ENCODE measurements at regions of chr15 and their contacts with region 1.

Region 1: GRCh38 chr15:45457641-45458433 is 64.7 kb downstream of the SLC30A4 start:
- DNase-seq: peak; percentile 78
- H3K4me3 ChIP-seq: peak overlapping the region; percentile 30 to 52 (median 48)
- H3K27ac ChIP-seq: peak overlapping the region; percentile 79 to 82 (median 80)
- H3K4me1 ChIP-seq: peaks cover 0 to 18% (median 14%) of the 10 kb centered on the region in 4 donors
- H3K27me3 ChIP-seq: no peaks in the 10 kb centered on the region
- CTCF ChIP-seq: peak; percentile 51 to 89 (median 84)
- EP300 ChIP-seq: no peak
- POLR2A ChIP-seq: no peak

Region 2: GRCh38 chr15:44426975-44427755 is 1030.7 kb before region 1 on chr15 and contains the start of gene CTDSPL2:
- intact Hi-C with region 1: no loop called
- DNase-seq: peak; percentile 99
- H3K4me3 ChIP-seq: peak within 1 kb of the TSS; percentile 66 to 89 (median 82)
- H3K27ac ChIP-seq: peak within 1 kb of the TSS; percentile 92 to 95 (median 94)
- H3K4me1 ChIP-seq: peaks cover 0 to 33% (median 26%) of the 10 kb centered on the region in 4 donors
- H3K27me3 ChIP-seq: no peaks in the 10 kb centered on the region
- CTCF ChIP-seq: peak in 2 of 4 experiments; percentile 14 to 19
- EP300 ChIP-seq: no peak
- POLR2A ChIP-seq: peak; percentile 29 to 55
- total RNA-seq, gene CTDSPL2: 25.4 to 57.8 (median 44.9) TPM

Region 3: DNA sequence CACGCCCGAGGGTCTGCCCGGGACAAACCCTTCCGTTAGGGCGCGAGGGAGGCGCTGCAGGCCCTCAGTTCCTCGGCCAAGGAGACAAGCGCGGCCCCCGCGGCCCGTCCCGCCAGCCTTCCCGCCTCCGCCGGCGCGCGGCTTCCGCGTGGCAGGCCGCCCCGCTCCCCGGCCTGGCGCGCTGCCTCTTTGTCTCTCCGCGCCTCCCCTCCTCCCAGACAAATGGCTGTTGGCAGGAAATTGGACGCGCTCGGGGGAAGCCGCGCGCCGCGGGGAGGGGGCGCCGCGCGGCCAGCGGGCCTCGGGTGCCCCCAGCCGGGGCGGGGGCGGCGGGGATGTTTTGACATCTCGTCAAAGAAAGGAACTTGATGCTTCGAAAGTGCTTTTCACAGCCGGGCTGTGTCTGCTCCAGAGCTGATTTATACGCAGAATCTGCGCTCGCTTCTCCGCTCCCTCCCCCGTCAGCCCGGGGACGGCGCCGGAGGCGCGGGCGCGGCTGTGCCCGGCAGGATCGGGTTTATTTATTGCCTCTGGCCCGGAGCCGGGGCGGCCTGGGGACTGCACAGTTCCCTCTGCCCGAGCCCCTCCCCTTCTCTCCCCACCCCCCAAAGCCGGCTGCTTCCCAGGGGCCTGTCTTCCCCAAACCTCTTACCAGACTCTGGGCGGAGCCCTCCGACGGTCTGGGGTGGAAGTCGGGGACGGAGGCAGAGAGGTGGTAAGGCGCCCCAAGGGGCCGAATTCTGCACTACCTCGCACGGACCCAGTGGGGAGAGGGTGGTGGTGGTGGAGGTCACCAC is 290.8 kb before region 1 on chr15:
- intact Hi-C with region 1: loop called (anchors 5 kb)
- DNase-seq: peak; percentile 95
- H3K4me3 ChIP-seq: peak overlapping the region; percentile 46 to 64 (median 56)
- H3K27ac ChIP-seq: peak overlapping the region; percentile 90 to 99 (median 96)
- H3K4me1 ChIP-seq: peaks cover 0 to 33% (median 21%) of the 10 kb centered on the region in 4 donors
- H3K27me3 ChIP-seq: no peaks in the 10 kb centered on the region
- CTCF ChIP-seq: peak; percentile 42 to 77 (median 70)
- EP300 ChIP-seq: no peak
- POLR2A ChIP-seq: peak in 1 of 2 donors; percentile 45

Region 4: GRCh38 chr15:45279024-45279698 is 178.7 kb before region 1 on chr15:
- intact Hi-C with region 1: loop called (anchors 2 kb)
- DNase-seq: peak; percentile 99
- H3K4me3 ChIP-seq: peak overlapping the region; percentile 50 to 59 (median 54)
- H3K27ac ChIP-seq: peak overlapping the region; percentile 80 to 90 (median 84)
- H3K4me1 ChIP-seq: peaks cover 0 to 16% (median 10%) of the 10 kb centered on the region in 4 donors
- H3K27me3 ChIP-seq: no peaks in the 10 kb centered on the region
- CTCF ChIP-seq: no peak
- EP300 ChIP-seq: no peak
- POLR2A ChIP-seq: peak; percentile 85 to 87

Region 5: GRCh38 chr15:45351229-45351628 is 106.6 kb before region 1 on chr15:
- intact Hi-C with region 1: no loop called
- DNase-seq: no peak
- H3K4me3 ChIP-seq: no peak overlapping the region
- H3K27ac ChIP-seq: no peak overlapping the region
- H3K4me1 ChIP-seq: peaks cover 0 to 3% (median 0%) of the 10 kb centered on the region in 4 donors
- H3K27me3 ChIP-seq: no peaks in the 10 kb centered on the region
- CTCF ChIP-seq: no peak
- EP300 ChIP-seq: no peak
- POLR2A ChIP-seq: no peak

Region 6: GRCh38 chr15:45402162-45402954 is 55.5 kb before region 1 on chr15:
- intact Hi-C with region 1: no loop called
- DNase-seq: peak; percentile 99
- H3K4me3 ChIP-seq: peak overlapping the region; percentile 70 to 96 (median 88)
- H3K27ac ChIP-seq: peak overlapping the region; percentile 90 to 96 (median 92)
- H3K4me1 ChIP-seq: peaks cover 0 to 37% (median 23%) of the 10 kb centered on the region in 4 donors
- H3K27me3 ChIP-seq: no peaks in the 10 kb centered on the region
- CTCF ChIP-seq: peak in 1 of 4 experiments; percentile 18
- EP300 ChIP-seq: no peak
- POLR2A ChIP-seq: peak; percentile 73 to 74

Region 7: DNA sequence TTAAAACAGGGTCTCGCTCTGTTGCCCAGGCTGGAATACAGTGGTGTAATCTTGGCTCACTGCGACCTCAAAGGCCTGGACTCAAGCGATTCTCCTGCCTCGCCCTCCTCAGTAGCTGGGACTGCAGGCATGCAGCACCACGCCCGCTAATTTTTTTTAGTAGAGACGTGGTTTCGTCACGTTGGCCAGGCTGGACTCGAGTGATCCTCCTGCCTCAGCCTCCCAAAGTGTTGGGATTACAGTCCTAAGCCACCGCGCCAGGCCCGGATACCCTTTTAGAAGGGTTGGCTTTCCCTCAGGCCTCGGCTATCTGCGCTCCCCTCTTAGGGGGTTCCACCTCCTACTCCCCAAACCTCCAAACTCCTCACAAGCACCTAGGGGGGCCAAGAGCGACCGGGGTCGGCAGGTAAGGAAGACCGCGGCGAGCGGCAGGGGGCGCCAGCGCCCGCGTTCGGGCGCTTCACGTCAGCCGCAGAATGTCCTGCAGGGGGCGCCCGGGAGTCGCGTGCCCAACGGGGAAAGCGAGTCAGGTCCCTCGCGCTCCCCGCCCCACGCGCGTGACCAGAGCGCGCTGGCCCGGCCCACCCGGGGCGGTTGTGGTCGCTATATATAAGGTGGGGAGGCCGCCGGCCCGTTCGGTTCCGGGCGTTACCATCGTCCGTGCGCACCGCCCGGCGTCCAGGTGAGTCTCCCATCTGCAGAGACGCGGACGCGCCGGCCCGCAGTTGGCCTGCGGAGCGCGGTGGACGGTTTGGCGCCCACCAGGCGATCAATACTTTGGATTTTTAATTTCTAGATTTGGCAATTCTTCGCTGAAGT is 27.7 kb before region 1 on chr15:
- intact Hi-C with region 1: loop called (anchors 1 kb)
- DNase-seq: peak; percentile 81
- H3K4me3 ChIP-seq: peak overlapping the region; percentile 16 to 50 (median 34)
- H3K27ac ChIP-seq: no peak overlapping the region
- H3K4me1 ChIP-seq: peaks cover 0 to 10% (median 4%) of the 10 kb centered on the region in 4 donors
- H3K27me3 ChIP-seq: no peaks in the 10 kb centered on the region
- CTCF ChIP-seq: peak; percentile 85 to 99 (median 94)
- EP300 ChIP-seq: no peak
- POLR2A ChIP-seq: peak in 1 of 2 donors; percentile 79

Region 8: DNA sequence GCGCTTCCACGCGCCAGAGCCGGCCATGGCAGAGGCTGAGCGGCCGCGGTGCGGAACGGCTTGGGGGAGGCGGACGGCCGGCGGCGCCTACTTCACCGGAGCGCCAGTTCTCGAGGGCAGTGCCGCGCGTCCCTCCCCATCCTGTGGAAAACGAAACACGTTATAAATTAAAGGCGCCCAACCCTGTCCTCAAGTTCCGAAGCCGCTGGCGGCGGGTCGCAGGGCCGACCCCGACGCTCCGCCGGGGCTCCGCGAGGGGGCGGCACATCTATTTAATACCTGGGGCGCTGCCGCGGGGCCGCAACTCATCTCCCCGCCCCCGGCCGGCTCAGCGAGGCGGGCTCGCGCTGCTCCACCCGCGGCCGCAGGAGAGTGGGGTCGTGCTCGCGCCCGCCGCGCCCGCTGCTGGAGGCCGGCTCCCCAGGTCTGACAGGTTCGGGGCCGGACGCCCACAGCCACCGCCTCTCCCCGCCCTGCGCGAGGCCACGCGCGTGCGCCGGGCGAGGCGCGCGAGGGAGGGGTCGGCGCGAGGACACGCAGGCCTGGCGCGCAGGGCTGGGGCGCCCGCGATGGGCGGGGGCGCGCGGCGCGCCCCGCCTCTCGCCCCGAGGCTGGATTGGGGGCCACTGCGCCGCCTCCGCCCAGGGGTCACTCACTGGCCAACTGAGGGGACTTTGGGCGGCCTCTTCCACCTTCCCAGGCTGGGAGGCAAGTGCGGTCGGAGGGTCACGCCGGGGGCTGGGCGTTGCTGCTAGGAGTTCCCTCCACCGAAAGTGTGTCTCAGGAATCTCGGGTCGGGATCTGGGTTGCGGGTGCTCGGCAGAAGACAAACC is 64.7 kb after region 1 on chr15 and contains the start of gene SLC30A4:
- intact Hi-C with region 1: loop called (anchors 2 kb)
- DNase-seq: peak; percentile 86
- H3K4me3 ChIP-seq: peak within 1 kb of the TSS; percentile 63 to 82 (median 77)
- H3K27ac ChIP-seq: peak within 1 kb of the TSS; percentile 89 to 92 (median 90)
- H3K4me1 ChIP-seq: peaks cover 0 to 28% (median 21%) of the 10 kb centered on the region in 4 donors
- H3K27me3 ChIP-seq: no peaks in the 10 kb centered on the region
- CTCF ChIP-seq: peak in 2 of 4 experiments; percentile 25 to 43
- EP300 ChIP-seq: no peak
- POLR2A ChIP-seq: no peak
- total RNA-seq, gene SLC30A4: 9.2 to 11.6 (median 9.6) TPM

Region 9: DNA sequence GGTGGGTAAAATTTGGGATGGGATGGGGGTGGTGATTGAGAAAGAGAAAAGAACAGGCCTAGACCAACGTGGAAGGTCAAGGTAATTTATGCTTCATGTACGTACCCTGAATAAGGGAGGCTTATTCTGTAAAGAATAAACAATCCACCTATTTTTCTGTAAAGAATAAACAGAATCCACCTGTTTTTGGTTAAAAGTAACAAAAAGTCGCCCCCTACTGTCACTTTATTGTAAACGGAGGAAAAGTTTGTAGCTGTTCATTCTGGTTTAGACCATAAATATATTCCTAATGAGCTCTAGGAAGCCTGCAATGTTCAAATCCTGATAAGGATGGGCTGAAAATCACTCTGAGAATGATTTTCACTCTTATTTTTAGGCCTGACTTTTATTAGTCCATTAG is 153.5 kb after region 1 on chr15:
- intact Hi-C with region 1: loop called (anchors 1 kb)
- DNase-seq: no peak
- H3K4me3 ChIP-seq: no peak overlapping the region
- H3K27ac ChIP-seq: no peak overlapping the region
- H3K4me1 ChIP-seq: peaks cover 0 to 6% (median 0%) of the 10 kb centered on the region in 4 donors
- H3K27me3 ChIP-seq: no peaks in the 10 kb centered on the region
- CTCF ChIP-seq: no peak
- EP300 ChIP-seq: no peak
- POLR2A ChIP-seq: no peak

Region 10: GRCh38 chr15:45812200-45812599 is 354.4 kb after region 1 on chr15:
- intact Hi-C with region 1: no loop called
- DNase-seq: no peak
- H3K4me3 ChIP-seq: no peak overlapping the region
- H3K27ac ChIP-seq: no peak overlapping the region
- H3K4me1 ChIP-seq: no peaks in the 10 kb centered on the region
- H3K27me3 ChIP-seq: no peaks in the 10 kb centered on the region
- CTCF ChIP-seq: no peak
- EP300 ChIP-seq: no peak
- POLR2A ChIP-seq: no peak